Activated CD4-positive, alpha-beta memory T cell treated with anti-CD3 and anti-CD28 coated beads for 36 hours (primary cell): ENCODE measurements at regions of chr11 and their contacts with region 1.

Region 1: DNA sequence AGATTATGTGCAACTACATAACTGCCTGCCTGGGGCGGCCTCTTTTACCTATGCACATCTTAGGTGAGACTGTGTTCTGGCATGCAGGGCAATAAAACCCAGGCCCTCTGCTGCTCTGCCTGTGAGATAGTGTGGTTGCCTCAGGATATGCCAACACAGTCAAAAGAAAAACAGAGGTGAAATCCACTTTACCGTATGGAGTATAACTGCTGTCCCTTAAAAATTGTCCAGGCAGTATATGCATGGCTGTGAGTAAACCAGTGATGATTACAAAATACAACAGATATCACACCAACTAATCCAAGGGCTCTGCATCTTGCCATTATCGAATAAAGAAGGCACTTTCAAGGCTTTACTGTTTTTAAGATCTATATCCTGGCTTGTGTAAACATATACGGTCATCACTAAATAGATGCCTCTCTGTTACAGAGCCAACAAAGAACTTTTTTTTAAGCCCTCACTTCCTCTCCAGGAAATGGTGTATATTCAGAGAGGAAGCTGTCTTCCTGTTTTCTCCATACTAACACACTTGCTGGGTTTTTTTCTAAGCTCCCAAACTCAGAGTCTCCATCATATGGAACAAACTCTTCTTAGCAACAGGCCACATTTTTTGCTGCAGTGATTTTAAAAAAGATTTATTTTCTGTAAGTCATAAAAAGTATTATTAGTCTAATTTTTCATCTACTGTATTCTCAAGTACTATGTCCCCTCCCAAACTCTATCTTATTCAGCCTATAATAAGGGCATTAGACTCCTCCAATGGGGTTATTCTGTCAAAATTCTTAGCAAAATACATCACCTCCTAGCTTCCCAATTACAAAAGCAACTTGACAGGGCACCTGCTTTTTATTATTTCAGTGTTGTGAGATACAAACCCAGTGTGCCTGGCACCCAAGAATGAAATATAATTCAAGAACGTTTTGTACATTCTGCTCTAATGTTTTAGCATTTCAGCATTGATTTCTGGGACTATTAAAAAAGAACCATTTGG is 135.2 kb downstream of the MAML2 start:
- DNase-seq: peak; percentile 44
- H3K4me3 Mint-ChIP-seq: peak overlapping the region; percentile 55
- H3K27ac Mint-ChIP-seq: peak overlapping the region; percentile 91
- H3K4me1 Mint-ChIP-seq: peaks cover 85% of the 10 kb centered on the region
- H3K27me3 Mint-ChIP-seq: no peaks in the 10 kb centered on the region

Region 2: GRCh38 chr11:96155627-96156378 is 52.0 kb before region 1 on chr11:
- CTCF ChIA-PET with region 1: no interaction called
- POLR2A ChIA-PET with region 1: no interaction called
- intact Hi-C with region 1: loop called (anchors 1 kb)
- DNase-seq: peak; percentile 88
- H3K4me3 Mint-ChIP-seq: peak overlapping the region; percentile 42
- H3K27ac Mint-ChIP-seq: peak overlapping the region; percentile 95
- H3K4me1 Mint-ChIP-seq: peaks cover 61% of the 10 kb centered on the region
- H3K27me3 Mint-ChIP-seq: no peaks in the 10 kb centered on the region

Region 3: DNA sequence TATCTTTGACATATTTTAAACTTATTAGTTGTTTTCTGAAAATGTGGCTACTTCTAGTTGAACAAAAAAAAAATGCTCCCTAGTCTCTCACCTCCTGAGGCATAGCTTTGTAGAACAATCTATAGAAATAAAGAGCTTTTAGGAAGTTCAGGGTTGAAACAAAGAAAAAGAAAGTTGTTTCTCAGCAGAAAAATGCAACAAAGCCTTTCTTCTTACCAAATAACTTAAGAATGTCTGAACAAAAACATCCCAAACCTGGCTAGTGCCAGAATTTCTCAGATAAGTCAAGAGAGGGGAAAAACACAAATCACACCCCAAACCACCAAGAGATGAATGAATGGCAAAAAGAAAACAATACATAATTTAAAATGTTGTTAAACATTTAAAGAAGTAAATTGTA is 21.2 kb after region 1 on chr11:
- CTCF ChIA-PET with region 1: no interaction called
- POLR2A ChIA-PET with region 1: no interaction called
- intact Hi-C with region 1: loop called (anchors 1 kb)
- DNase-seq: no peak
- H3K4me3 Mint-ChIP-seq: no peak overlapping the region
- H3K27ac Mint-ChIP-seq: peak overlapping the region; percentile 83
- H3K4me1 Mint-ChIP-seq: peaks cover 81% of the 10 kb centered on the region
- H3K27me3 Mint-ChIP-seq: no peaks in the 10 kb centered on the region

Region 4: DNA sequence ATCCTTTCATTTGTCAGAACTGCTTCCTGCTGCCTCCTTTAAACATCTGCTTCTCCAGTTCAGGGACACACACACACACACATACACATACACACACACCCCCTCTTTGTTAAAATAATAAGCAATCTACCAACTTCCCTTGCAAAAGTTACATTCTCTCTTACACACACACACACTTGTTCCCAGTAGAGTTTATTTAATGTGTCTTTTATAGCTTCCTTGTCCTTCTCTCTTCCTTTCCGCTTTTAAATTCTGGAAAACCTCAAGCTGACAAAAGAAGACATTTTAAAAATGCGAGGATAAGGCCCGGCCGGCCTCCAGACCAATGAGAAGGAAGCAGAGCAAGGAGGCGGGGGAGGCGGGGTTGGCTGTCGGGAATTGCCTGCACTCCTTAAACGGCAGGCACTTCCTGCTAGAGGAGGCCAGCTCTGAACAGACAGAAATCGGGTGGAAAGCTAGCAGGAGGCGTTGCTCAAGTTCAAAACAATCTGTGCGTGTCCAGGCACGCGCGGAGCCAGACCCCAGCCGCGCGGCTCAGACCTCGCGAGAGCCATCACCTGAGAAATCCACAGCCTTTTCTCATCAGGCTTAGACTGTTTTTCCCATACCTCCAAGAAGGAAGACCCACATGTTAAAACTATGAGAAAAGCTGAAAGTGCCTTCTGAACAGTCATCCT is 35.4 kb after region 1 on chr11:
- CTCF ChIA-PET with region 1: interaction called, 4 read pairs
- POLR2A ChIA-PET with region 1: no interaction called
- intact Hi-C with region 1: loop called (anchors 1 kb)
- DNase-seq: peak; percentile 91
- H3K4me3 Mint-ChIP-seq: peak overlapping the region; percentile 78
- H3K27ac Mint-ChIP-seq: peak overlapping the region; percentile 95
- H3K4me1 Mint-ChIP-seq: peaks cover 53% of the 10 kb centered on the region
- H3K27me3 Mint-ChIP-seq: no peaks in the 10 kb centered on the region

Region 5: DNA sequence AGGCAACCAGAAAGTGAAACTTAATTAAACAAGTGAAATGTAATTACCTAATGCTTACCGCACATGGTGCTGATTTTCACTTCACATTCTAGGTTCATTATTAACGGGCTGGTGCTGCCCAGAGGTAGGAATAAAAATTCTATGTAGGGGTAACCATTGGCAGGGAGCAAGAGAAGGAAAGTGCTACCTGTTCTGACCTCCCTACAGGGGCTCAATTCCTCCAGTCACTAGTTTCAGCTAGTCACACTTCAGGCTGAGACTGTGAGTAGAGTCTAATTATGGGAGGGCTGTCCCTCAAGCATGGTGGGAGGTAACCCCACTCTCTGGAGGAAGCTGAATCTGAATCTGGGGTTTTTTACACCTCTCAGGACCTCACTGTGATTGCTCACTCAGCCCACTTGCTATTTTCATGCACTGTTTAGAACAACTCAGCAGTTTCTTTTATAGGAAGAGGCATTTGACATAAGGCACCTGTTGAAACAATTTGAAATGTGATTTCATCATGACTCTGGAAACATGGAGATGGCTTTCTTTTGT is 59.8 kb after region 1 on chr11:
- CTCF ChIA-PET with region 1: no interaction called
- POLR2A ChIA-PET with region 1: no interaction called
- intact Hi-C with region 1: loop called (anchors 1 kb)
- DNase-seq: peak; percentile 71
- H3K4me3 Mint-ChIP-seq: peak overlapping the region; percentile 42
- H3K27ac Mint-ChIP-seq: peak overlapping the region; percentile 84
- H3K4me1 Mint-ChIP-seq: peaks cover 90% of the 10 kb centered on the region
- H3K27me3 Mint-ChIP-seq: no peaks in the 10 kb centered on the region

Region 6: GRCh38 chr11:96658436-96658835 is 450.7 kb after region 1 on chr11:
- CTCF ChIA-PET with region 1: no interaction called
- POLR2A ChIA-PET with region 1: no interaction called
- intact Hi-C with region 1: no loop called
- DNase-seq: no peak
- H3K4me3 Mint-ChIP-seq: no peak overlapping the region
- H3K27ac Mint-ChIP-seq: no peak overlapping the region
- H3K4me1 Mint-ChIP-seq: no peaks in the 10 kb centered on the region
- H3K27me3 Mint-ChIP-seq: no peaks in the 10 kb centered on the region